ENCODE measurements at regions of chr1 and their contacts with region 1.

Region 1: GRCh38 chr1:20521960-20522861 is 14.3 kb upstream of the MUL1 start:
- DNase-seq: peak; percentile 66
- ATAC-seq: peak; percentile 94
- H3K4me3 ChIP-seq: no peak overlapping the region
- H3K27ac ChIP-seq: no peak overlapping the region
- H3K4me1 ChIP-seq: no peaks in the 10 kb centered on the region
- H3K27me3 ChIP-seq: no peaks in the 10 kb centered on the region
- CTCF ChIP-seq: peak; percentile 84

Region 2: GRCh38 chr1:20640183-20640597 is 118.0 kb after region 1 on chr1:
- intact Hi-C with region 1: loop called (anchors 5 kb)
- DNase-seq: no peak
- ATAC-seq: peak; percentile 74
- H3K4me3 ChIP-seq: no peak overlapping the region
- H3K27ac ChIP-seq: no peak overlapping the region
- H3K4me1 ChIP-seq: peaks cover 2% of the 10 kb centered on the region
- H3K27me3 ChIP-seq: no peaks in the 10 kb centered on the region
- CTCF ChIP-seq: peak; percentile 77